ENCODE measurements at regions of chr5 and their contacts with region 1.

Region 1: GRCh38 chr5:82351754-82352145 is 73.6 kb upstream of the RPS23 start:
- DNase-seq: no peak
- ATAC-seq: peak; percentile 90
- H3K4me3 ChIP-seq: no peak overlapping the region
- H3K27ac ChIP-seq: no peak overlapping the region
- H3K4me1 ChIP-seq: peaks cover under 1% of the 10 kb centered on the region
- H3K27me3 ChIP-seq: no peaks in the 10 kb centered on the region
- CTCF ChIP-seq: peak; percentile 73 to 76 (median 75)
- EP300 ChIP-seq: no peak
- POLR2A ChIP-seq: no peak
- RAD21 ChIP-seq: peak; percentile 83

Region 2: DNA sequence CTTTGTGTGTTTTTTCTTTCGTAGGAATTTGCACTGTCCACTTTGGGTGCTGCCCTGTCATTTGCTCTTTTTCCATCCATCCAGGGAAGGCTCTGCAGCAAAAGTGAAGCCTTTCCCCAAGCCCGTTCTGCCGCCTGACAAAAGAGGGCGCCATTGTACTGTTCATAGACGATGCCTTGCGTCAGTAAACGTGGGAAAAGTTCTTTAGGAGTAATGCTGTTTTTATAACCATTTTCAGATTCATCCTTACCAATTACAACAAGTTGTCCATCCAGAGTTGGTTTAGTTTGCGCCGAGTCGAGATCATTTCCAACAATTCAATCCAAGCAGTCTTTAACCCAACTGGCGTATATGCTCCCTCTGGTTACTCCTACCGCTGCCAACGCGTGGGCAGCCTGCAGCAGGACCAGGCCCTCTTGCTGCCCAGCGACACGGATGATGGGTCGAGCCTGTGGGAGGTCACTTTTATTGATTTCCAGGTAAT is 39.3 kb before region 1 on chr5:
- CTCF ChIA-PET with region 1: interaction called, 32 read pairs
- POLR2A ChIA-PET with region 1: no interaction called
- RAD21 ChIA-PET with region 1: no interaction called
- SMC1A ChIA-PET with region 1: no interaction called
- in situ Hi-C with region 1: no loop called
- intact Hi-C with region 1: no loop called
- DNase-seq: no peak
- ATAC-seq: peak; percentile 70
- H3K4me3 ChIP-seq: no peak overlapping the region
- H3K27ac ChIP-seq: no peak overlapping the region
- H3K4me1 ChIP-seq: no peaks in the 10 kb centered on the region
- H3K27me3 ChIP-seq: no peaks in the 10 kb centered on the region
- CTCF ChIP-seq: peak; percentile 64 to 77 (median 74)
- EP300 ChIP-seq: no peak
- POLR2A ChIP-seq: no peak
- RAD21 ChIP-seq: peak; percentile 70

Region 3: GRCh38 chr5:82494942-82495341 is 143.2 kb after region 1 on chr5:
- CTCF ChIA-PET with region 1: interaction called, 8 read pairs
- POLR2A ChIA-PET with region 1: no interaction called
- RAD21 ChIA-PET with region 1: no interaction called
- SMC1A ChIA-PET with region 1: interaction called, 5 read pairs
- in situ Hi-C with region 1: no loop called
- intact Hi-C with region 1: loop called (anchors 5 kb)
- DNase-seq: no peak
- ATAC-seq: no peak
- H3K4me3 ChIP-seq: no peak overlapping the region
- H3K27ac ChIP-seq: no peak overlapping the region
- H3K4me1 ChIP-seq: no peaks in the 10 kb centered on the region
- H3K27me3 ChIP-seq: no peaks in the 10 kb centered on the region
- CTCF ChIP-seq: peak in 1 of 3 experiments; percentile 15; a peak in 2 of 6 replicates
- EP300 ChIP-seq: no peak
- POLR2A ChIP-seq: no peak
- RAD21 ChIP-seq: no peak

Region 4: DNA sequence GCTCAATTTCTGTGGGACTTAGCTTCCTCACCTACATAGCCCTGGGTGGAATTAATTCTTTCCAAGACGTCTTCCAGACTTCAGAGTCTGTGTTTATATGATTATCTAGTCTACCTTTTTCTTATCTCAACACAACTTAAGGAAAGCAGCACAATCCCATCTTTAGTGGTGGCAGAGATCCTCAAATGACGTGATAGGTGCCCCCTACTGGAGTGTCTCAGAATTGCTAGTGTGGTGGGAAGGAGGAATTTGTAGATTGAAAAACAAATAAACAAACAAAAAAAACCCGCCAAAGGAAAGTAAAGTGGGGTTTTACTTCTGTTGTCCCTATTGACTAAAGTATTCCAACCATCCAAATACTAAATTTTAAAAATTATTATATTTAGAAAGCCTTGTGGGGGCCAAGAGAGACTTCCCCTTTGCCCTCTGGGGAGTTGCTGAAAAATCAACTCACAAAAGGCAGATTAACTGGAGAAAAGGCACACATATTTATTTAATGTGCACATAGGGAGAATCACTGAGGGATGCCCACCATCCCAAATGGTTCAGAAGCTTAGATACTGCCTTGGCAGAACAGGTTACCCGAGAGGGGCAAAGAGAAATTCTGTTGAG is 442.2 kb after region 1 on chr5:
- CTCF ChIA-PET with region 1: interaction called, 19 read pairs
- POLR2A ChIA-PET with region 1: no interaction called
- RAD21 ChIA-PET with region 1: interaction called, 3 read pairs
- SMC1A ChIA-PET with region 1: interaction called, 4 read pairs
- in situ Hi-C with region 1: no loop called
- intact Hi-C with region 1: loop called (anchors 1 kb)
- DNase-seq: no peak
- ATAC-seq: no peak
- H3K4me3 ChIP-seq: no peak overlapping the region
- H3K27ac ChIP-seq: no peak overlapping the region
- H3K4me1 ChIP-seq: no peaks in the 10 kb centered on the region
- H3K27me3 ChIP-seq: no peaks in the 10 kb centered on the region
- CTCF ChIP-seq: peak; percentile 19 to 66 (median 51); a peak in 5 of 6 replicates
- EP300 ChIP-seq: no peak
- POLR2A ChIP-seq: no peak
- RAD21 ChIP-seq: peak; percentile 44

Region 5: GRCh38 chr5:83473346-83474163 is 1121.8 kb after region 1 on chr5:
- CTCF ChIA-PET with region 1: interaction called, 4 read pairs
- POLR2A ChIA-PET with region 1: no interaction called
- RAD21 ChIA-PET with region 1: interaction called, 4 read pairs
- SMC1A ChIA-PET with region 1: interaction called, 5 read pairs
- in situ Hi-C with region 1: loop called (anchors 10 kb)
- intact Hi-C with region 1: loop called (anchors 2 kb)
- DNase-seq: peak; percentile 24
- ATAC-seq: peak; percentile 83
- H3K4me3 ChIP-seq: peak overlapping the region; percentile 78
- H3K27ac ChIP-seq: no peak overlapping the region
- H3K4me1 ChIP-seq: 0 out of 2 replicates have a peak, but pooled peaks cover 10% of the 10 kb centered on the region
- H3K27me3 ChIP-seq: peaks cover 15 to 17% of the 10 kb centered on the region in 2 experiments
- CTCF ChIP-seq: peak; percentile 73 to 85 (median 83)
- EP300 ChIP-seq: no peak
- POLR2A ChIP-seq: no peak
- RAD21 ChIP-seq: peak; percentile 84